GM10248 (cell line): ENCODE measurements at regions of chr6 and their contacts with region 1.

Region 1: DNA sequence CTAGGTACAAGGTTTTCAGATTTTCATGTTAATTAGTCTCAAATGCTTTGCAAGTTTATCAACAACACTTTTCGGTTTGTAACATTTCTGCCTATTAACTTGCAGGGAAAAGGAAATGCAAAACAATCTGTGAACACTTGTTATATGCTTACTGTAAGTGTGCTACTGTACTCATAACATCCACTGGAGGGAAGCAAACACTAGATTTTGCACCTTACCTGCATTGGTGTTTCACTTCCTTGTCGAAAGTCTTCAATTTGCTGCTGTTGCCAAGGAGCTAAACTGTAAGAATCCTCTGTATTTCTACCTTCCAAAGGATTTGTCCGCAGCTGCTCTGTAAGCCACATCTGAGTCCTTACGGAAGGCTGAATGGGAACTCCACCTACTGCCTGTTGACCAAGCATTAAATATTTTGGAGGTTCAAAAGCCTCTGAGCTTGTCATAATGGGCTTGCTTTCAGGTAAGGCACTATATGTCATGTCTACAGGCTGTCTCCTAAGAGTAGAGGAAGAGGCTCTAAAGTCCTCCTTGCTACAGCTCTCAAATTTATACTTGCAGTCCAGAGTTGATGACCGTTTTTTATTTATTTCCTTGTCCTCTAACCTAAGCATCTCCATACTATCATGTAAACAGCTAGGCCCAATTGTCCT is 17.3 kb downstream of the PLN start:
- DNase-seq: peak; percentile 65
- CTCF ChIP-seq: peak; percentile 75

Region 2: DNA sequence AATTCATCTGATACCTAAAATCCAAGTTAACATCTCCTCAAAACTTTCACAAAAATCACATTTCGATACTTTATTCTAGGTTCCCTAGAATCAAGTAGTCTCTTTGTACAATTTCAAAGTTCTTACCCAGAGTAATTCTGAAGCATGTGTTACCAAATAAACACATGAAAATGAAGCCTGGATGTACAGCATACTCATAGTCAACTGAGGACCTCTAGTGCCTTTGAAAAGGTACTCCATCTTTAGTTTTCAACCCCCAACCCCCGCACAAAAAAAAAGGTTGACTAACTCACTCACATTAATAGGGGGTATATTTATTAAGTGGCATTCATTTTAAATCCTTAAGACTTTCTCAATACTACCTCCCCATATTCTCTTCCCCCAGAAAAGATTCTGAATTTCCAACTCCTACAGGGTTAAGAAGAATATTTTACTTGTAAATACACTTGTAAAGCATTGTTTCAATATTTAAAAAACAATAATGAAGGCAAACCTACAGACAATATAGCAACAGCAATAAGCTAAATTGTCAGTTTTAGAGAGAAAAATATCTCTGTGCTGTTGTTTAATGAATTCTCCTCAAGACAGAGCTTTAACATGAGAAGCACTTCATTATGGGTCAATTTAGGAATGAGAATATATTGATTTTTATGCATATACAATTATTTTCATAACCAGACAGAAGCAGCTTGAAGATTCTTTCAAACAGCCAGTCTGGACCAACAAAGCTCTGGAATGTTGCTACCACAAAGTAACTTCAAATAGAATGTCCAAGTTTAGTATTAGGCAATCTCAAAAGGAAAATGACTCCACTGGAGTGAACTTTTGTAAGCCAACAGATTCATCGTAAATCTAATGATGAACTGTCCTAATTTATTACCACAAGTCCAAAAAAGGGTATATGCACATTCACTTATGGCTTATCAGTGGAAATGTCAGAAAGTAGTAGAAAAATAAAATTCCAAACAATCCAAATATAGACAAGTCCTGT is 14.1 kb before region 1 on chr6:
- CTCF ChIA-PET with region 1: interaction called, 18 read pairs
- POLR2A ChIA-PET with region 1: no interaction called
- DNase-seq: peak; percentile 35
- CTCF ChIP-seq: peak; percentile 33

Region 3: DNA sequence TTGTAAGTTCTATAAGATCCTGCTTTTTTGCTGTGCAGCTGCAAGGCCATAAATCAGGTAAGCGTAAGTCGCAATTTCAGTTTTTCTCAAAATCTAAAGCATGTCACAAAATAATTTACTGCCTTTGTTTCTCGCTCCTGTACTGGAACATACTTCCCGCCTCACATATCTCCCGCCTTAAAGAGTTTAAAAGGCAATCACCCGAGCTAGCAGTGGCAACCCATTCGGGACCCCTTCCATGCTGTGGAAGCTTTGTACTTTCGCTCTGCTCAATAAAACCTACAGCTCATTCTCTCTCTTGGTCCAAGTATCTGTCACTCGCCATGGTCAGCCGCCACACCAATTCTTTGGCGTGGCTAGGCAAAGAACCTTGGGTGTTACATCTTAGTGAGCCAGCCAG is 52.0 kb after region 1 on chr6:
- CTCF ChIA-PET with region 1: interaction called, 11 read pairs
- POLR2A ChIA-PET with region 1: no interaction called
- DNase-seq: no peak
- CTCF ChIP-seq: no peak

Region 4: DNA sequence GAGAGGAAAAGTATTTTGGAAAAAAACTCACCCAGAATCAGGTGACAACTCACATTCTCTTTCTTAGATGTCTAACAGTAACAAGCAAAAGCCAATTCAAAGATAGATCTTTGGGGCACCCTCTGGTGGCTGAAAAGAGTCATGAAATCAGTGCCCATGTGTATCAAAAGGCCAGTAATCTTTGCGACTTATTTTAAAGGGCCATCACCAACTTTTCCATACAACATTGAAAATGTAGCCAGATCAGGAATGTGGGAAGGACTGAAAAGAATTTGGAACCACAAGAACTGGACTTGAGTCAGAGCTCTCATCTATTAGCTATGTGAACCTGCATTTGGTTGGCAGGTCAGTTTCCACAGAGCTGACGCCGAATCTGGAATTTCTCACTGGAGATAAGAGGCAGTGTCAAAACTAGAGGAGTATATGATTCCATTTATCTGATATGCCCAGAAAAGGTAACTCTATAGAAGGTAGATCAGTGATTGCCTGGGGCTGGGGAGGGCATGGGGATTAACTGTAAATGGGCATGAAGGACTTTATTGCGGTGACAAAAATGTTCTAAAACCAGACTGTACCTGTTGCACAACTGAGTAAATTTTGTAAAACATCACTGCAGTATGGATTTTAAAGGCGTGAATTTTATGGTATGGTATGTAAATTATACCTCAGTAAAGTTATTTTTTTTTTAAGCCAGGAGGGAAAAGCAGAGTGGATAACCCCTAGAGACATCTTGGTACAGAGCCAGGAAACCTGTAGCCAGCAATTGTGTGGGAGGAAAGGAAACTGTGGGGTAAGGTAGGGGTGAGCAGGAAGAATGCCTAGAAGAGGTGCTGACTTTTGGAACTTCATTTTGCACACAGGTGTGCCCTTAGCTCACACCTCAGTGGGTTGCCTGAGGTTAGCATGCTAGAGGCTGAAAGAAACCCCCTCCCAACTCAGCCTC is 211.4 kb after region 1 on chr6:
- CTCF ChIA-PET with region 1: interaction called, 63 read pairs
- POLR2A ChIA-PET with region 1: no interaction called
- DNase-seq: peak; percentile 71
- CTCF ChIP-seq: peak; percentile 65

Region 5: GRCh38 chr6:118893807-118894424 is 328.5 kb after region 1 on chr6 and contains the start of gene ASF1A:
- CTCF ChIA-PET with region 1: interaction called, 12 read pairs
- POLR2A ChIA-PET with region 1: no interaction called
- DNase-seq: peak; percentile 92
- CTCF ChIP-seq: peak; percentile 74